Gastrocnemius medialis (tissue), 4 donors: ENCODE measurements at regions of chr4 and their contacts with region 1.

Region 1: GRCh38 chr4:100189820-100190642 is at the start of gene DDIT4L:
- DNase-seq: peak; percentile 78 to 83
- ATAC-seq: peak; percentile 60 to 67
- H3K4me3 ChIP-seq: peak within 1 kb of the TSS; percentile 78 to 95 (median 84)
- H3K27ac ChIP-seq: peak within 1 kb of the TSS; percentile 93 to 97 (median 96)
- H3K4me1 ChIP-seq: peaks cover 15 to 24% of the 10 kb centered on the region in 2 donors
- H3K27me3 ChIP-seq: no peaks in the 10 kb centered on the region
- CTCF ChIP-seq: peak in 1 of 5 experiments; percentile 1
- POLR2A ChIP-seq: peak; percentile 91 to 96
- total RNA-seq, gene DDIT4L: 41.8 to 99.7 (median 69.9) TPM

Region 2: GRCh38 chr4:99655308-99656081 is 534.5 kb before region 1 on chr4:
- in situ Hi-C with region 1: no loop called
- intact Hi-C with region 1: loop called (anchors 10 kb)
- DNase-seq: peak; percentile 78 to 80
- ATAC-seq: peak; percentile 14 to 50
- H3K4me3 ChIP-seq: peak overlapping the region; percentile 62 to 75 (median 62)
- H3K27ac ChIP-seq: peak overlapping the region; percentile 94 to 99 (median 98)
- H3K4me1 ChIP-seq: peaks cover 47 to 55% of the 10 kb centered on the region in 2 donors
- H3K27me3 ChIP-seq: no peaks in the 10 kb centered on the region
- CTCF ChIP-seq: no peak
- POLR2A ChIP-seq: peak in 1 of 2 donors; percentile 30

Region 3: GRCh38 chr4:100208964-100209363 is 18.9 kb after region 1 on chr4:
- in situ Hi-C with region 1: no loop called
- intact Hi-C with region 1: loop called (anchors 2 kb)
- DNase-seq: no peak
- ATAC-seq: no peak
- H3K4me3 ChIP-seq: no peak overlapping the region
- H3K27ac ChIP-seq: no peak overlapping the region
- H3K4me1 ChIP-seq: peaks cover 16 to 23% of the 10 kb centered on the region in 2 donors
- H3K27me3 ChIP-seq: no peaks in the 10 kb centered on the region
- CTCF ChIP-seq: no peak
- POLR2A ChIP-seq: no peak

Region 4: GRCh38 chr4:100248476-100248875 is 58.4 kb after region 1 on chr4:
- in situ Hi-C with region 1: no loop called
- intact Hi-C with region 1: loop called (anchors 1 kb)
- DNase-seq: no peak
- ATAC-seq: peak; percentile 26 to 57
- H3K4me3 ChIP-seq: no peak overlapping the region
- H3K27ac ChIP-seq: peak overlapping the region; percentile 12 to 64 (median 53)
- H3K4me1 ChIP-seq: peaks cover 16 to 30% of the 10 kb centered on the region in 2 donors
- H3K27me3 ChIP-seq: no peaks in the 10 kb centered on the region
- CTCF ChIP-seq: no peak
- POLR2A ChIP-seq: no peak

Region 5: DNA sequence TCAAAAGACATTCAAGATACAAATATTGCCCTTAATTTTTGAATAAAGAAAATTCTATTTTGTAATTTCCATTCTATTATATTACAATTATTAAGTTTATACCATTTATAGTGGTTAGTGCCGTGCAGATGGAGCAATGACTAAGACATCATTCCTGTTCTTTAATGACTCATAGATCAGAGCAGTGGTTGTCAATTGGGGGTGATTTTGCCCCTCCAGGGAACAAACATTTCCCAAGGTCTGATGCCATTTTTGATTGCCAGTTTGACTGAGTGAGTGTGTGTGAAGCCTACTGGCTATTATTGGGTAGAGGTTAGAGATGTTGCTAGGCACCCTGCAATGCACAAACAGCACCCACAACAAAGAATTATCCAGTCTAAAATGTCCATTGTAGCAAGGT is 98.1 kb after region 1 on chr4:
- in situ Hi-C with region 1: no loop called
- intact Hi-C with region 1: loop called (anchors 5 kb)
- DNase-seq: no peak
- ATAC-seq: no peak
- H3K4me3 ChIP-seq: no peak overlapping the region
- H3K27ac ChIP-seq: peak overlapping the region; percentile 47 to 87 (median 72)
- H3K4me1 ChIP-seq: peaks cover 29 to 65% of the 10 kb centered on the region in 2 donors
- H3K27me3 ChIP-seq: no peaks in the 10 kb centered on the region
- CTCF ChIP-seq: no peak
- POLR2A ChIP-seq: no peak

Region 6: DNA sequence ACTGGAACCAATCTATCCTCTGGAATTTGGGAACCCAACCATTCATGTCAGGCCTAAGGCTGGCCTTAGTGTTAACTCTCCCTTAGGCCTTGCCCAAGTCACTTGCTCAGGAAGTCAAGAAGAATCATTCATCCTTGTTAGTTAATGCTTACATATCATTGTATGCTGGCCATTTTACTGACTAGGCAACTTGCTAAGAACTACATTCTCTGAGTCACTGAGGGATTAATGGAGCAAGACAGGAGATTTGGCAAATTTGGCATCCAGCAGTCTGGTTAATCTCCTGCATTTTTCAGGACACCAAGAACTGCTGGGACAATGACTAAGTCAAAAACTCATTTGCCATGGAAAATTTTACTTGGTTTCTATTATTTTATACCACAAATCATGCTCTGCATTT is 116.0 kb after region 1 on chr4:
- in situ Hi-C with region 1: loop called in 1 of 4 experiments (anchors 10 kb)
- intact Hi-C with region 1: loop called (anchors 5 kb)
- DNase-seq: no peak
- ATAC-seq: no peak
- H3K4me3 ChIP-seq: no peak overlapping the region
- H3K27ac ChIP-seq: peak overlapping the region; percentile 66 to 87 (median 77)
- H3K4me1 ChIP-seq: peaks cover 22 to 33% of the 10 kb centered on the region in 2 donors
- H3K27me3 ChIP-seq: no peaks in the 10 kb centered on the region
- CTCF ChIP-seq: no peak
- POLR2A ChIP-seq: no peak

Region 7: DNA sequence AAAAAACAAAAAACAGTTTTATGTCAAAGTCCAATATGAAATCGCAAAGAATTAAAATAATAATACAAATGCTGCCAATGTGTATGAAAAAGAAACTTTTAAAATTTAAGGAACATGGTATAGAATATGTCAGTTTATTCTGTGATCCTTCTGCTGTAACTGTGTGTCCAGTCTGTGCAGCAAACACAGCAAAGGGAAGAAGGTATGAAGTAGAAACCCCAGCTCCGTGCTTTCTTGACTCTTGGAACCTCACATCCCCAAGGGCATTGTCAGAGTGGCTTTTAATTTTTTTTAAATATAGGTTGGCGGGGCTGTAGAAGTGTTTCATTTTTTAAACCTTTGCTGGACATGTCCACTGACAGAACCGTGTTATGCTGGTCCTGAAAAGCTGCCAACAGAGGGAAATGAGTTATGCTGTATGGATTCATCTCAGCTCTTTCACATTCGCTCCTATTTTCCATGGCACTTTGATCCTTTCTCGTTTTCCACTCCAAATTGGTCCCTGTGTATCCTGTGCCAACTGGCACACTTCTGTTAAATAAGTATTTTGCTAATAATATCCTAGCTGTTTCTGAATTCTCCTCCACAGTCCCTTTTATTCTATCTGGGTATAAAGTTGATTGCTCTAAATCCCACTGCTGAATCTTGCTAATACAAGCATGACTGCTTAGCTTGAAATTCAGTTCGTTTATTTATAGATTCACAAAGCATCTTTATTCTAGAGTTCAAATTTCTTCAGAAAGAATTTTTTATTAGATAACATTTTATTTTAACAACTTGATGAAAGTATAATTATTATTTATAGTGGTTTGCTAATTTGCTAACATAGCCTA is 127.2 kb after region 1 on chr4:
- in situ Hi-C with region 1: no loop called
- intact Hi-C with region 1: loop called (anchors 5 kb)
- DNase-seq: no peak
- ATAC-seq: no peak
- H3K4me3 ChIP-seq: peak overlapping the region; percentile 16 to 25 (median 22)
- H3K27ac ChIP-seq: peak overlapping the region; percentile 46 to 65 (median 61)
- H3K4me1 ChIP-seq: peaks cover 20 to 34% of the 10 kb centered on the region in 2 donors
- H3K27me3 ChIP-seq: no peaks in the 10 kb centered on the region
- CTCF ChIP-seq: no peak
- POLR2A ChIP-seq: no peak